ENCODE measurements at regions of chr5 and their contacts with region 1.

Region 1: GRCh38 chr5:39547553-39548154 is 122.9 kb upstream of the DAB2 start:
- DNase-seq: peak; percentile 85
- H3K4me3 ChIP-seq: no peak overlapping the region
- H3K27ac ChIP-seq: peak overlapping the region; percentile 15
- H3K4me1 ChIP-seq: peaks cover 25% of the 10 kb centered on the region
- H3K27me3 ChIP-seq: no peaks in the 10 kb centered on the region
- CTCF ChIP-seq: peak; percentile 54 to 55
- POLR2A ChIP-seq: no peak

Region 2: DNA sequence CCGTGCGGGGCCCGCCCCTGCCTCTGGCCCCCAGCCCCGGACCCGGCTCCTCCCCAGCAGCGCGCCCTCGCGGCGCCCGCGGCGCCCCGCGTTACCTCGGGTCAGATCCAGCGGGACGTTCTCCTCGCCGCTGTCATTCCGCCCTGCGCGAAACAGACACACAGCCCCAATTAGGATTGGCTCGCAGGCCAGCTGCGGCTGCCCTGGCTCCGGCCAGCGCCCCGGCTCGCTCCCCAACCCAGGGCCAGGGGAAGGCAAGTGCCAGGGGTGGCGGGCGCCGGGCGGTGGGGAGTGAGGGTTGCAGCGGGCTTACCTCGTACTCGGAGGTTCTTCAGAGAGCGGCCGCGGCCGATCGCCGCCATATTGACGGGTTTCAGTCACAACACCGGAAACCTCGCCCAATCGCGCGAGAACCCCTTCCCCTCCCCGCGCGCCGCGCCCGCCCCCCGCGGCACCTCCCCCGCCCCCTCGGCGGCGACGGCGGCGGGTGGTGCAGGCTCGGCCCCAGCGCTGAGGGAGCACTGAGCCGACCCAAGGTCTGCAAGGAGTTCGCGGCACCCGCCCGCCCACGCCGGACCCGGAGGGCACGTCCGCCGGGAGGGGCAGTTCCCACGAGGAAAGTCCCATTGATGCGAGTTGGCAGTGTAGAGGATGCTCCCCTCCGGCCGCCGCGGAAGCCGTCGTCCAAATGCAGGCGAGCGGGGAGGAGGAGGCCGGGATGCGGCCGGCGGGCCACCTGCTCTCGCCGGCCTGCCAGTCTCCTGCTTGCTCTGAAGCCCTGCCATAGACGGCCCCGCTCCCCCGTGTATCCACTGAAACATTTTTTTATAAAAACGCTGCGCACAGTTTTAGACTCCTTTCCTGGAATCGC is 473.4 kb before region 1 on chr5 and contains the start of gene RICTOR:
- CTCF ChIA-PET with region 1: no interaction called
- POLR2A ChIA-PET with region 1: no interaction called
- dilution Hi-C with region 1: no loop called
- intact Hi-C with region 1: loop called (anchors 10 kb)
- DNase-seq: peak; percentile 91
- H3K4me3 ChIP-seq: peak within 1 kb of the TSS; percentile 89 to 99 (median 92)
- H3K27ac ChIP-seq: peak within 1 kb of the TSS; percentile 90
- H3K4me1 ChIP-seq: peaks cover 35% of the 10 kb centered on the region
- H3K27me3 ChIP-seq: no peaks in the 10 kb centered on the region
- CTCF ChIP-seq: no peak
- POLR2A ChIP-seq: peak; percentile 83
- total RNA-seq, gene RICTOR: 38.0 and 39.5 TPM in 2 replicates

Region 3: DNA sequence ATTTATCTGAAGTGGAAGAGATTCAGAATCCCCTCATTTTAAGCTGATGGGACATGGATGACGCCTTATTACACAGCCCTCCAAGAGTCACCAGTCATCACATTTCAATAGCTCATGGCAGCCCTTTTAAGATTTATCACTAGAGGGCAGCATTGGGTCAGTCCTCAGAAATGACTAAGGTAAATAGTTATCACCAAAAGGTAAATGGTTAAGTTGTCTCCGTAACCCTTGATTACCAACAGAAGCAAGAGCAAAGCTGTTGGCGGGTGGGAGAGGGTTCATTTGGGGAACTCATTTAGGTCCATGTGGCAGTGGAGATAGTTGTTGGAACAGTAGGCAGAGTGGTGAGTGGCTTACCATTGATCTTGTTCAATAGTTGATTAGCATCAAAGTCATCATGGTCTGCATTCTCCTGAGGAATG is 171.3 kb before region 1 on chr5:
- CTCF ChIA-PET with region 1: interaction called, 156 read pairs
- POLR2A ChIA-PET with region 1: interaction called, 3 read pairs
- dilution Hi-C with region 1: no loop called
- intact Hi-C with region 1: loop called (anchors 1 kb)
- DNase-seq: peak; percentile 72
- H3K4me3 ChIP-seq: no peak overlapping the region
- H3K27ac ChIP-seq: no peak overlapping the region
- H3K4me1 ChIP-seq: no peaks in the 10 kb centered on the region
- H3K27me3 ChIP-seq: no peaks in the 10 kb centered on the region
- CTCF ChIP-seq: peak; percentile 57 to 71
- POLR2A ChIP-seq: no peak

Region 4: GRCh38 chr5:39399135-39400036 is 148.3 kb before region 1 on chr5:
- CTCF ChIA-PET with region 1: interaction called, 97 read pairs
- POLR2A ChIA-PET with region 1: no interaction called
- dilution Hi-C with region 1: loop called (anchors 25 kb)
- intact Hi-C with region 1: no loop called
- DNase-seq: peak; percentile 76
- H3K4me3 ChIP-seq: no peak overlapping the region
- H3K27ac ChIP-seq: peak overlapping the region; percentile 75
- H3K4me1 ChIP-seq: peaks cover 25% of the 10 kb centered on the region
- H3K27me3 ChIP-seq: no peaks in the 10 kb centered on the region
- CTCF ChIP-seq: no peak
- POLR2A ChIP-seq: no peak

Region 5: GRCh38 chr5:39447059-39447458 is 100.6 kb before region 1 on chr5:
- CTCF ChIA-PET with region 1: interaction called, 10 read pairs
- POLR2A ChIA-PET with region 1: no interaction called
- dilution Hi-C with region 1: no loop called
- intact Hi-C with region 1: no loop called
- DNase-seq: peak; percentile 72
- H3K4me3 ChIP-seq: no peak overlapping the region
- H3K27ac ChIP-seq: peak overlapping the region; percentile 50
- H3K4me1 ChIP-seq: peaks cover 19% of the 10 kb centered on the region
- H3K27me3 ChIP-seq: no peaks in the 10 kb centered on the region
- CTCF ChIP-seq: no peak
- POLR2A ChIP-seq: no peak

Region 6: DNA sequence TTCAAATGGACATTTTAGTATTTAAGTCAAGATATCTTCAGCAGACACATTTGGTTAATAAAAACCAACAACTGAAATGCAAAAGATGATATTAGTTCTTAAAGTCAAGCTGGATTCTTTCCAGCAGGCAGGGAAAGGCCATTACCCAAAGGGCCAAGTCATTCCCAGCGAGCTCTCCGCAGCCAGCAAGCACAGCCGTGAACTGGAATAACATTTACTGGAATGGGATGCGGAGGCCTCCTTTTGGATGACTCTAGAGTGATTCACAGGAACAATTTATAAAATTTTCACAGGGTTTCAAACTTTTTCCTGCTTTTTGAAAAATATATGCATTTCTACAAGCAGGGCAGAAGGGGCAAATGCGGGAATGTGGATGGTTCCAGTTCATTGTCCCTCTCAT is 46.3 kb before region 1 on chr5:
- CTCF ChIA-PET with region 1: interaction called, 24 read pairs
- POLR2A ChIA-PET with region 1: no interaction called
- dilution Hi-C with region 1: no loop called
- intact Hi-C with region 1: loop called (anchors 2 kb)
- DNase-seq: peak; percentile 83
- H3K4me3 ChIP-seq: no peak overlapping the region
- H3K27ac ChIP-seq: peak overlapping the region; percentile 64
- H3K4me1 ChIP-seq: peaks cover 26% of the 10 kb centered on the region
- H3K27me3 ChIP-seq: no peaks in the 10 kb centered on the region
- CTCF ChIP-seq: no peak
- POLR2A ChIP-seq: no peak

Region 7: GRCh38 chr5:39526914-39527477 is 20.7 kb before region 1 on chr5:
- CTCF ChIA-PET with region 1: interaction called, 29 read pairs
- POLR2A ChIA-PET with region 1: interaction called, 17 read pairs
- dilution Hi-C with region 1: no loop called
- intact Hi-C with region 1: loop called (anchors 1 kb)
- DNase-seq: peak; percentile 98
- H3K4me3 ChIP-seq: no peak overlapping the region
- H3K27ac ChIP-seq: peak overlapping the region; percentile 99
- H3K4me1 ChIP-seq: peaks cover 37% of the 10 kb centered on the region
- H3K27me3 ChIP-seq: no peaks in the 10 kb centered on the region
- CTCF ChIP-seq: no peak
- POLR2A ChIP-seq: peak; percentile 15

Measured in endothelial cell of umbilical vein (primary cell).